CD8-positive, alpha-beta T cell (primary cell): ENCODE measurements at regions of chrX and their contacts with region 1.

Region 1: DNA sequence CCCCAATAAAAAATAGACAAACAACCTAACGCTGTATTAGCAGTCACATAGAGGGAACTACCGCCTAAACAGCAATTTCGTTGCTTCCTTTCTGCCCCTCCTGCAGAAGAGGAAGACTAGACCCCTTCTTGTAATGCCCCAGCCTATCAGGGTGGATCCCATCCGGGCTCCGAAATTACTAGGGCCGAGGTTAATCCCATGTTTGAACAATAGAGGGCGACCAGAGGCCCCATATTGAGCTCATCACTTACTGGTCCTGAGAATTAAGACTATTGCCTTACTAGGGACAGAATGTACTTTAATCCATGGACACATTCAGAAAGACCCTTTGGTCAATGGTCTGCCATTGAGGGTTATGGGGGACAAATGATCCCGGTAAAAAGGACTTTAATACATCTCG is 11.8 kb upstream of the ZNF630 start:
- DNase-seq: peak; percentile 5 to 63 (median 39)
- ATAC-seq: peak; percentile 74
- H3K4me3 ChIP-seq: no peak overlapping the region
- H3K4me3 Mint-ChIP-seq: no peak overlapping the region
- H3K27ac ChIP-seq: no peak overlapping the region
- H3K27ac Mint-ChIP-seq: no peak overlapping the region
- H3K4me1 ChIP-seq: no peaks in the 10 kb centered on the region
- H3K4me1 Mint-ChIP-seq: no peaks in the 10 kb centered on the region
- H3K27me3 ChIP-seq: no peaks in the 10 kb centered on the region
- H3K27me3 Mint-ChIP-seq: no peaks in the 10 kb centered on the region
- CTCF ChIP-seq: peak; percentile 56

Region 2: GRCh38 chrX:48468693-48469691 is 385.8 kb after region 1 on chrX:
- CTCF ChIA-PET with region 1: interaction called, 4 read pairs
- POLR2A ChIA-PET with region 1: no interaction called
- intact Hi-C with region 1: loop called in 1 of 2 experiments (anchors 1 kb)
- DNase-seq: peak in 7 of 9 experiments; percentile 14 to 66 (median 40)
- ATAC-seq: peak; percentile 65
- H3K4me3 ChIP-seq: peak overlapping the region; percentile 63 to 70
- H3K4me3 Mint-ChIP-seq: peak overlapping the region; percentile 89
- H3K27ac ChIP-seq: peak overlapping the region; percentile 44 to 48
- H3K27ac Mint-ChIP-seq: peak overlapping the region; percentile 75
- H3K4me1 ChIP-seq: peaks cover 5% of the 10 kb centered on the region
- H3K4me1 Mint-ChIP-seq: peaks cover 20% of the 10 kb centered on the region
- H3K27me3 ChIP-seq: no peaks in the 10 kb centered on the region
- H3K27me3 Mint-ChIP-seq: no peaks in the 10 kb centered on the region
- CTCF ChIP-seq: no peak